MCF 10A (cell line): ENCODE measurements at regions of chr1 and their contacts with region 1.

Region 1: DNA sequence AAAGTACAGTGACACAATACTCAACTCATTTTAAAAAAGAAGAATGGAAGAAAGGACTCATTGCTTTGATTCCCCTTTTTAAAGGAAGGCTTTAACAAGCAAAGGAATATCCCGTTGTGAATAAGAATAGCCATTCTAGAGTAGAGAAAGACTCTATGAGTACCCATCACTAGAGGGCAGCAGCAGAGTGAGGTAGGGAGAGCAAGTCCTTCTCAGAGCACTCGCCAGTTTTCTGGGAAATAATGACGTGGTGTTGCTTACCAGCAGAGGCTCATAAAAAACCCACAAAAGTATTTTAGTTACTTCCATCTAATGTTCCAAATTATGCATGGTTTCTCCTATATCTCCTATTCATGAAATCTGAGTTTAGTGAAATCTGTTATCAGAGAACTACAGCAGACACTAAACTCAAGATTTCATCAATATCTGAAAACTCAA is 74.6 kb downstream of the USP24 start:
- DNase-seq: peak; percentile 86
- H3K4me3 Mint-ChIP-seq: no peak overlapping the region
- H3K27ac Mint-ChIP-seq: peak overlapping the region; percentile 46
- H3K4me1 Mint-ChIP-seq: peaks cover 5% of the 10 kb centered on the region
- H3K27me3 Mint-ChIP-seq: no peaks in the 10 kb centered on the region
- CTCF ChIP-seq: peak; percentile 66

Region 2: DNA sequence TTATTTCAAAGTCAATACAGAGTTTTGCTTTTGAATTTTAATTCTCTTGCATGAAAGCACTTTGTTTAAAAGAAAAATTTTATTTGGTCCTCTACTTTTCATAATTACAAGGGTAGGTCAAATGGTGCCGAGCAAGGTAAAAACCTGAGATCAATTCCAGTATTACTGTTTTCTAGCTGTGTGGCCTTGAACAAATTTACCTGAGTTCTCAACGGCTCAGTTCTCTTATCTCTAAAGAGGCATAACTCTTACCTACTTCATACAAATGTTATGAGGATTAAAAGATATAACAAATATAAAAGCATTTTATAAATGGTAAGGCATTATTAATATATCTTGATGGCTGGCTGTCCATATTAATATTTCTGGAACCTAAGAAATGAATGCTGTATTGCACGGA is 32.1 kb after region 1 on chr1:
- CTCF ChIA-PET with region 1: interaction called, 10 read pairs
- POLR2A ChIA-PET with region 1: interaction called, 3 read pairs
- intact Hi-C with region 1: no loop called
- DNase-seq: no peak
- H3K4me3 Mint-ChIP-seq: no peak overlapping the region
- H3K27ac Mint-ChIP-seq: no peak overlapping the region
- H3K4me1 Mint-ChIP-seq: peaks cover 5% of the 10 kb centered on the region
- H3K27me3 Mint-ChIP-seq: no peaks in the 10 kb centered on the region
- CTCF ChIP-seq: no peak

Region 3: DNA sequence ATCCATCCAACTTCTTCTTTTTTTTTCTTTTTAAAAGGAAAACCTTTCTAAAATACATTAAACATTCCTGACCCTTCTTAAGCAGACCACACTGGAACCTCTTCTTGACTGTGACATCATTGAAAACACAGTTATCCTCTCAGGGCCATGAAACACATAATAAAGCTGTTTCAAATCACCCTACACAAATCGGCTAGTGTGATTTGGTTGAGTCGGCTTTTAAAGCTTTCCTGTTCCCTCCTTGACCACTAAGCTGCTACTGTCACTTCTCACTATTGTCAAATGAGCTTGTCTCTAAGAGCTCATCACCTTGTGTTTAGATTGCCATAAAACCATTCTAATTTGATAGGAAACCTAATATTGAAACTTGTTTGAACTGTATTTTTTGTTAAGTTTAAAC is 68.7 kb after region 1 on chr1:
- CTCF ChIA-PET with region 1: interaction called, 10 read pairs
- POLR2A ChIA-PET with region 1: interaction called, 5 read pairs
- intact Hi-C with region 1: no loop called
- DNase-seq: no peak
- H3K4me3 Mint-ChIP-seq: no peak overlapping the region
- H3K27ac Mint-ChIP-seq: no peak overlapping the region
- H3K4me1 Mint-ChIP-seq: peaks cover 47% of the 10 kb centered on the region
- H3K27me3 Mint-ChIP-seq: no peaks in the 10 kb centered on the region
- CTCF ChIP-seq: no peak

Region 4: GRCh38 chr1:55337801-55338447 is 197.4 kb after region 1 on chr1:
- CTCF ChIA-PET with region 1: no interaction called
- POLR2A ChIA-PET with region 1: no interaction called
- intact Hi-C with region 1: loop called (anchors 2 kb)
- DNase-seq: peak; percentile 74
- H3K4me3 Mint-ChIP-seq: no peak overlapping the region
- H3K27ac Mint-ChIP-seq: no peak overlapping the region
- H3K4me1 Mint-ChIP-seq: no peaks in the 10 kb centered on the region
- H3K27me3 Mint-ChIP-seq: no peaks in the 10 kb centered on the region
- CTCF ChIP-seq: peak; percentile 23

Region 5: GRCh38 chr1:55468142-55468795 is 327.7 kb after region 1 on chr1:
- CTCF ChIA-PET with region 1: no interaction called
- POLR2A ChIA-PET with region 1: no interaction called
- intact Hi-C with region 1: no loop called
- DNase-seq: no peak
- H3K4me3 Mint-ChIP-seq: no peak overlapping the region
- H3K27ac Mint-ChIP-seq: no peak overlapping the region
- H3K4me1 Mint-ChIP-seq: peaks cover 11% of the 10 kb centered on the region
- H3K27me3 Mint-ChIP-seq: no peaks in the 10 kb centered on the region
- CTCF ChIP-seq: no peak